ENCODE measurements at regions of chr11 and their contacts with region 1.

Region 1: GRCh38 chr11:116691771-116692177 is 81.0 kb downstream of the BUD13 start:
- DNase-seq: peak; percentile 24
- H3K4me3 ChIP-seq: no peak overlapping the region
- H3K27ac ChIP-seq: no peak overlapping the region
- H3K4me1 ChIP-seq: no peaks in the 10 kb centered on the region
- H3K27me3 ChIP-seq: no peaks in the 10 kb centered on the region
- CTCF ChIP-seq: peak; percentile 75 to 91
- POLR2A ChIP-seq: no peak

Region 2: GRCh38 chr11:115334932-115335788 is 1356.6 kb before region 1 on chr11:
- CTCF ChIA-PET with region 1: interaction called, 16 read pairs
- POLR2A ChIA-PET with region 1: no interaction called
- dilution Hi-C with region 1: no loop called
- intact Hi-C with region 1: loop called (anchors 2 kb)
- DNase-seq: peak; percentile 41
- H3K4me3 ChIP-seq: no peak overlapping the region
- H3K27ac ChIP-seq: no peak overlapping the region
- H3K4me1 ChIP-seq: no peaks in the 10 kb centered on the region
- H3K27me3 ChIP-seq: no peaks in the 10 kb centered on the region
- CTCF ChIP-seq: peak; percentile 29 to 33
- POLR2A ChIP-seq: no peak

Region 3: GRCh38 chr11:116276051-116277044 is 415.4 kb before region 1 on chr11:
- CTCF ChIA-PET with region 1: no interaction called
- POLR2A ChIA-PET with region 1: no interaction called
- dilution Hi-C with region 1: no loop called
- intact Hi-C with region 1: loop called (anchors 1 kb)
- DNase-seq: peak; percentile 50
- H3K4me3 ChIP-seq: no peak overlapping the region
- H3K27ac ChIP-seq: no peak overlapping the region
- H3K4me1 ChIP-seq: no peaks in the 10 kb centered on the region
- H3K27me3 ChIP-seq: peaks cover 0 to 3% of the 10 kb centered on the region in 2 experiments
- CTCF ChIP-seq: peak; percentile 84 to 95
- POLR2A ChIP-seq: no peak

Region 4: GRCh38 chr11:116513894-116514293 is 177.9 kb before region 1 on chr11:
- CTCF ChIA-PET with region 1: interaction called, 112 read pairs
- POLR2A ChIA-PET with region 1: no interaction called
- dilution Hi-C with region 1: no loop called
- intact Hi-C with region 1: loop called (anchors 1 kb)
- DNase-seq: peak; percentile 78
- H3K4me3 ChIP-seq: no peak overlapping the region
- H3K27ac ChIP-seq: no peak overlapping the region
- H3K4me1 ChIP-seq: no peaks in the 10 kb centered on the region
- H3K27me3 ChIP-seq: peaks cover 0 to 5% of the 10 kb centered on the region in 2 experiments
- CTCF ChIP-seq: peak; percentile 43 to 71
- POLR2A ChIP-seq: no peak

Region 5: GRCh38 chr11:116636341-116636929 is 55.3 kb before region 1 on chr11:
- CTCF ChIA-PET with region 1: no interaction called
- POLR2A ChIA-PET with region 1: no interaction called
- dilution Hi-C with region 1: no loop called
- intact Hi-C with region 1: no loop called
- DNase-seq: no peak
- H3K4me3 ChIP-seq: no peak overlapping the region
- H3K27ac ChIP-seq: no peak overlapping the region
- H3K4me1 ChIP-seq: no peaks in the 10 kb centered on the region
- H3K27me3 ChIP-seq: no peaks in the 10 kb centered on the region
- CTCF ChIP-seq: no peak
- POLR2A ChIP-seq: no peak

Region 6: DNA sequence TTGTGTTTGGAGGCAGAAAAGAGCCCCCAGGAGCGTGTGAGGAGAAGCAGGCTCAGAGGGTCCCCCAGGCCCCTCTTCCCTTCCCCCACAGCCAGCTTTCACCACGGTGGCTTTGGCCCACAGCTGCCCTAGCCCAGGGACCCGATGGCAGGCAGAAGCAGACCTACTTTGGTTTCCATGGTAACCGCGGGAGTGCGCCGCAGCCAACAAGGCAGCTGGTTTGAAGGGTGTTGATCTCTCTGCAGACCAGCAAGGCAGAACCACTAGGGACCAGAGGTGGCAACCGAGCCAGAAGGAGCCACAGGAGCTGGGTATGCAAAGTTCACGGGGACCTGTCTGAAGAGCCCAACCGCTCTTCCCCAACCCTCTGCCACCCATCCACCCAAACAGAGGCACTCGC is 11.6 kb after region 1 on chr11:
- CTCF ChIA-PET with region 1: interaction called, 14 read pairs
- POLR2A ChIA-PET with region 1: no interaction called
- dilution Hi-C with region 1: no loop called
- intact Hi-C with region 1: no loop called
- DNase-seq: no peak
- H3K4me3 ChIP-seq: no peak overlapping the region
- H3K27ac ChIP-seq: no peak overlapping the region
- H3K4me1 ChIP-seq: no peaks in the 10 kb centered on the region
- H3K27me3 ChIP-seq: peaks cover 3 to 8% of the 10 kb centered on the region in 2 experiments
- CTCF ChIP-seq: no peak
- POLR2A ChIP-seq: no peak

Region 7: GRCh38 chr11:116762132-116762531 is 70.4 kb after region 1 on chr11:
- CTCF ChIA-PET with region 1: no interaction called
- POLR2A ChIA-PET with region 1: no interaction called
- dilution Hi-C with region 1: no loop called
- intact Hi-C with region 1: no loop called
- DNase-seq: no peak
- H3K4me3 ChIP-seq: no peak overlapping the region
- H3K27ac ChIP-seq: no peak overlapping the region
- H3K4me1 ChIP-seq: no peaks in the 10 kb centered on the region
- H3K27me3 ChIP-seq: no peaks in the 10 kb centered on the region
- CTCF ChIP-seq: no peak
- POLR2A ChIP-seq: no peak

Region 8: GRCh38 chr11:116871248-116871647 is 179.5 kb after region 1 on chr11:
- CTCF ChIA-PET with region 1: no interaction called
- POLR2A ChIA-PET with region 1: no interaction called
- dilution Hi-C with region 1: no loop called
- intact Hi-C with region 1: no loop called
- DNase-seq: no peak
- H3K4me3 ChIP-seq: no peak overlapping the region
- H3K27ac ChIP-seq: no peak overlapping the region
- H3K4me1 ChIP-seq: peaks cover 6% of the 10 kb centered on the region
- H3K27me3 ChIP-seq: no peaks in the 10 kb centered on the region
- CTCF ChIP-seq: no peak
- POLR2A ChIP-seq: no peak

Region 9: GRCh38 chr11:117134431-117134830 is 442.7 kb after region 1 on chr11:
- CTCF ChIA-PET with region 1: no interaction called
- POLR2A ChIA-PET with region 1: no interaction called
- dilution Hi-C with region 1: no loop called
- intact Hi-C with region 1: no loop called
- DNase-seq: no peak
- H3K4me3 ChIP-seq: no peak overlapping the region
- H3K27ac ChIP-seq: no peak overlapping the region
- H3K4me1 ChIP-seq: no peaks in the 10 kb centered on the region
- H3K27me3 ChIP-seq: no peaks in the 10 kb centered on the region
- CTCF ChIP-seq: no peak
- POLR2A ChIP-seq: no peak

Measured in endothelial cell of umbilical vein (primary cell).